ENCODE measurements at regions of chr20 and their contacts with region 1.

Region 1: DNA sequence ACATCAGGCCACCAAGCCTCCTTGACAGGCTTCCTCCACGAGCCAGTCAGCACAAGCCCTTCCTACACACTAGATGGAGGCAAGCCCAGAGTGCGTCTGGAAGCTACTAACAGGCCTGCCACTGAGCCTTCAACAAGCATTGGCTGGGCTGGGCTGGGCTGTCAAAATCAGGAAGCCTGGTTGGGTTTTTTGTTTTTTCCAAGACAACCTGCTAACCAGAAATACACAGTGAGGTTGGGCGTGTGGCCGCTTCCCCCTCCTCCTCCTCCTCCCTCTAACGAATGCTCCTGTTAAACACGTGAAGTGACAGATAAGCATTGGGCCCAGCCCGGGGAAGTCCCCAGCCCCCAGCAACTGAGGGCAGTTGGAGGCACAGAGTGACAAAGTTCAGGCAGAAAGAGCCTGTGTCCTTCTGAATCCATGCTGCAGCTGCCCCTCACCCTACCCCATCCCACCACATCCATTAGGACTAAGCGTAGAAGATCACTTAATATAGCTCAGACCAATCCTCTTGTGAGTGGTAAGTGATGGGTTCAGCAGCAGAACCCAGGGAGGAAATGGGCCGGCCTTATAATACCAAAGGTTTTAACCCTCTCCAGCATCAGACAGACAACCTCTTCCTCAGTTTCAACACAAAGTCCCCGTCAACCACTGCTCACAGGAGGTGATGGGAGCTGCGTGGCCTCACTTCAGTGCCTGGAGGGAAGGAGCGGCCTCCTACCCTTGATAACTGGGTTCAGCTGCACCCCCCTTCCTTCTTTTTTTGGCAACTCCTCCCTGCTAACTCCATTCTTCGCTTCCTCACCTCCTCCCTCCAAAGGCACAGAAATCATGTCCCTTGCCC is 1.1 kb downstream of the NFATC2 start:
- DNase-seq: peak; percentile 54
- ATAC-seq: peak; percentile 63
- H3K4me3 Mint-ChIP-seq: peak overlapping the region; percentile 98
- H3K27ac Mint-ChIP-seq: peak overlapping the region; percentile 98
- H3K4me1 Mint-ChIP-seq: peaks cover 55% of the 10 kb centered on the region
- H3K27me3 Mint-ChIP-seq: no peaks in the 10 kb centered on the region
- CTCF ChIP-seq: no peak

Region 2: GRCh38 chr20:50815162-50815989 is 726.0 kb before region 1 on chr20:
- CTCF ChIA-PET with region 1: no interaction called
- POLR2A ChIA-PET with region 1: no interaction called
- intact Hi-C with region 1: loop called (anchors 10 kb)
- DNase-seq: no peak
- ATAC-seq: peak; percentile 56
- H3K4me3 Mint-ChIP-seq: peak overlapping the region; percentile 81
- H3K27ac Mint-ChIP-seq: peak overlapping the region; percentile 98
- H3K4me1 Mint-ChIP-seq: peaks cover 96% of the 10 kb centered on the region
- H3K27me3 Mint-ChIP-seq: no peaks in the 10 kb centered on the region
- CTCF ChIP-seq: no peak

Region 3: DNA sequence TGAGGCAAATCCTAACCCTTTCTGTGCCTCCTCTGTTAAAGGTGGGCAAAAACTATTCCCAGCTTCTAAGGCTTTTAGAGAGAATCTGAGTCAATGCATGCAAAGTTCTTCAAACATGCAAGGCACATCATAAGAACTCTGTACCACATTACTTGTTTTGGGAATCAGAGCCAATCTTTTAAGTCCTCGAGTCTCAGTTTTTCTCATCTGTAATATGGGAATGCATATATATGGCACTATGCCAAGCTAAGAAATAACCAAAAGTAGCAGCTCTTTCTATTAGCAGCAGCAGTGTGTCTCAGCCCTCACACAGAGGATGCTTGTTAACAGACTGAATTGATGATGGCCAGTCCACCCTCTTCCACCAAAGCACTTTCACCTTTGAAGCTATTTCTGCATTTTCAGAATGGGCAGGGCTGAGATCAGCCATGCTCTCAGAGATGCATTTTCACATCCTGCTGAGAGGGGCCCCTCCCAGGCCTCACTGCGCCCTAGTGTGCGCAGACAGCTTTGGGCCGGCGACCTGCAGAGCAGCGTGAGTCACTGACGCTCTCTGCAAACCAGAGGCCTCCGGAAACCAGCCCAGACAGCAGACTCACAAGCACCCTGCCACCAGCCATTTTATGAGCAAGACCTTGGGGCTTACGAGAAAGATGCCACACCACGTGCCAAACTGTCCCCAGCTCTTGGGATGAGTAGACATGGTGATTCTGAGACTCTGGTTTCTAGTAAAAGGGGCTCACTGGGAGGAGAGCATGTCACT is 136.9 kb before region 1 on chr20:
- CTCF ChIA-PET with region 1: interaction called, 13 read pairs
- POLR2A ChIA-PET with region 1: interaction called, 22 read pairs
- intact Hi-C with region 1: loop called (anchors 1 kb)
- DNase-seq: peak; percentile 69
- ATAC-seq: peak; percentile 80
- H3K4me3 Mint-ChIP-seq: peak overlapping the region; percentile 56
- H3K27ac Mint-ChIP-seq: peak overlapping the region; percentile 99
- H3K4me1 Mint-ChIP-seq: peaks cover 84% of the 10 kb centered on the region
- H3K27me3 Mint-ChIP-seq: no peaks in the 10 kb centered on the region
- CTCF ChIP-seq: no peak

Region 4: GRCh38 chr20:51423290-51423667 is 118.1 kb before region 1 on chr20:
- CTCF ChIA-PET with region 1: interaction called, 6 read pairs
- POLR2A ChIA-PET with region 1: no interaction called
- intact Hi-C with region 1: loop called (anchors 2 kb)
- DNase-seq: no peak
- ATAC-seq: peak; percentile 70
- H3K4me3 Mint-ChIP-seq: peak overlapping the region; percentile 4
- H3K27ac Mint-ChIP-seq: peak overlapping the region; percentile 82
- H3K4me1 Mint-ChIP-seq: peaks cover 65% of the 10 kb centered on the region
- H3K27me3 Mint-ChIP-seq: no peaks in the 10 kb centered on the region
- CTCF ChIP-seq: no peak

Region 5: DNA sequence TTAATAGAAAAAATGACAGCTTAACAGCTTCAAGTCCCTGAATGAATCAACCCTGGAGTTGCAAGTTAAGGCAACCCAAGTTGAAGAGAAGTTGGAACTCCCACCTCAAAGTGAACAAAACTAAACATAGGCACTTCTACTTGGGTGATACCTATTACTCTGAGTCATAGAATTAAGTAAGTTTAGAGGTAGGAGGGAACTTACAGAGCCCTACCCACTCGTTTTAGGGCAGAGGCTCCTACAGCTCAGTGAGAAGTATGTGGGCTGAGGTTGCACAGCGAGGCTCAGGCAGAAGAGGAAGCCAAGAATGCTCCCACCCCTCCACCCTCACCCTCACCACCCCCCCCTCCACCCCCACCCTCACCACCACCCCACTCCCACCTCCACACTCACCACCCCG is 41.1 kb before region 1 on chr20:
- CTCF ChIA-PET with region 1: interaction called, 5 read pairs
- POLR2A ChIA-PET with region 1: interaction called, 8 read pairs
- intact Hi-C with region 1: loop called (anchors 1 kb)
- DNase-seq: no peak
- ATAC-seq: peak; percentile 85
- H3K4me3 Mint-ChIP-seq: no peak overlapping the region
- H3K27ac Mint-ChIP-seq: peak overlapping the region; percentile 69
- H3K4me1 Mint-ChIP-seq: peaks cover 93% of the 10 kb centered on the region
- H3K27me3 Mint-ChIP-seq: no peaks in the 10 kb centered on the region
- CTCF ChIP-seq: no peak

Region 6: GRCh38 chr20:51531141-51531710 is 10.2 kb before region 1 on chr20:
- CTCF ChIA-PET with region 1: interaction called, 5 read pairs
- POLR2A ChIA-PET with region 1: interaction called, 35 read pairs
- intact Hi-C with region 1: loop called (anchors 1 kb)
- DNase-seq: no peak
- ATAC-seq: peak; percentile 55
- H3K4me3 Mint-ChIP-seq: peak overlapping the region; percentile 62
- H3K27ac Mint-ChIP-seq: peak overlapping the region; percentile 89
- H3K4me1 Mint-ChIP-seq: peaks cover 92% of the 10 kb centered on the region
- H3K27me3 Mint-ChIP-seq: no peaks in the 10 kb centered on the region
- CTCF ChIP-seq: no peak

Region 7: DNA sequence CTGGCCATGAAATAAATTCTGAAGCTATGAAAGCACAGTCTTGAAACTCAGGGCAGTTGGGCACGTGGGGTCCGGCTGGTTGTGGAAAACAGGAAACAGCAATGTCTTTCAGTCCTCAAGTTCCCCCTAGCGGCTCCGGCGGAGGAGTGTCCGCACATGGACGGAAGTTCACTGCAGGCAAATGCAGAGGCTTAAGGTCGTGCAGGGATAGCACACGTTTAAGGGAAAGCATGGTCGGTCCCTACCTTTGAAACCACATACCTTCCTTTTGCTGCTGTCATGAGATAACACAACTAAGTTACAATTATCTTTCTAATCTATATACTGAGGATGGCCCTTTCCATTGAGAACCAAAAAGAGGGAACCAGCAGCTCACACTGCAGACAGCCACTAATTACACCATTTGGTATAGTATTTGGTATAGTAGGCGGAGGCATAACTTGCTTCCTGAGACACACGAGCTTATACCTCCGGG is 53.7 kb after region 1 on chr20:
- CTCF ChIA-PET with region 1: interaction called, 15 read pairs
- POLR2A ChIA-PET with region 1: interaction called, 3 read pairs
- intact Hi-C with region 1: loop called (anchors 1 kb)
- DNase-seq: peak; percentile 57
- ATAC-seq: peak; percentile 93
- H3K4me3 Mint-ChIP-seq: peak overlapping the region; percentile 55
- H3K27ac Mint-ChIP-seq: no peak overlapping the region
- H3K4me1 Mint-ChIP-seq: peaks cover 21% of the 10 kb centered on the region
- H3K27me3 Mint-ChIP-seq: peaks cover 38% of the 10 kb centered on the region
- CTCF ChIP-seq: peak; percentile 91

Region 8: DNA sequence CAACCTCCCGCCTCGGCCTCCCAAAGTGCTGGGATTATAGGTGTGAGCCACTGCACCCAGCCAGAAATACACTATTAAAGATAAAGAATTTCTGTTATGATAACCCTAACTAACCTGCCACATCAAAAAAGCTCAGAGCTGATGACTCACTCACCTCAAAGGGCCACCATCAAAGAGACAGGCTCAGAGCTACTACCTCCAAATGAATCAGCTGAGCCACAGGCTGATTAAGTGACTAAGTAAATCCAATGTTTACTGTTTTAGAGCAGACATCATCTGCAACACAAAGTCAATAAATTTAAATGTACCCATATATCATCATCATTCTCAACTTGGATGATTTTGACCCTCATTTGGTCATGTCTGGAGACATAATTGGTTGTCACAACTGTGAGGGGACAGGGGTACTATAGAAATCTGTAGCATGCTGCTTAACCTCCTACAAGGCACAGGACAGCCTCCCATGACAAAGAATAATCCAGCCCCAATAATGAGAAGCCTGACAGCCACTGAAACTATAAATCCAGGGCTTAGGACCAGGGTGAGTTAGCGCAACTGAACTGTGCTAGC is 120.3 kb after region 1 on chr20:
- CTCF ChIA-PET with region 1: no interaction called
- POLR2A ChIA-PET with region 1: no interaction called
- intact Hi-C with region 1: no loop called
- DNase-seq: no peak
- ATAC-seq: peak; percentile 10
- H3K4me3 Mint-ChIP-seq: no peak overlapping the region
- H3K27ac Mint-ChIP-seq: no peak overlapping the region
- H3K4me1 Mint-ChIP-seq: peaks cover 15% of the 10 kb centered on the region
- H3K27me3 Mint-ChIP-seq: peaks cover 3% of the 10 kb centered on the region
- CTCF ChIP-seq: no peak

Region 9: DNA sequence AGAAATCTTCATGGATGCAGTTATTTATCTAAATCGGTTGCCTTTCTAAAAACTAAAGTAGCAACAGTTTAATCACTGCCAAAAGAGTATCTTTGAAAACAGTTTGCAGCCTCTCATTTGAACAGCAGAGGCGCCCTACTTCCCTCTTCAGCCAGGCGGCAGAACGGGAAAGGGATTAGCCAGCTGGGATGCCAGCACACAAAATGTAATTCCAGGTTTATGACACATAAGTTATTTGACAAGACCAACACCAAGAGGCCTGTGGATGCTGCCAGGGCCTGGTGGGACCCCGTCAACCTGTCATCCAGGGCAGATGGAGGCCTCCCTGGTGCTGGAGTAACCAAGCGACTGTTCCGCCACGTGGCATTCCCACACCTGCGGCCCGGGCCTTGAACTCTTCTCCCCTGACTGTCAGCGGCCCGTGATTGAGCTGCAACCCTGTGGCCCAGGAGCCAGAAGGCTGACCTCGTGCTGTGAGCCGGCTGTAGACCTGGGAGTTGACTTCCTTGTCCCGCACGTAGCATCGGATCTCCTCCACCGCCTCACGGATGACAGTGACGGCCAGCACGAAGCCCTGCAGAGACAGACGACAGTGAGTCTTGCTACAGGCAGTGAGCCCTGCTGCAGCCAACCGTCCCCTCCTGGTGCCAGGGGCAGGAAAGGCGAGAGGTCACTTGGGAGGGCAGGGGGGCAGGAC is 171.2 kb after region 1 on chr20:
- CTCF ChIA-PET with region 1: no interaction called
- POLR2A ChIA-PET with region 1: no interaction called
- intact Hi-C with region 1: no loop called
- DNase-seq: no peak
- ATAC-seq: no peak
- H3K4me3 Mint-ChIP-seq: no peak overlapping the region
- H3K27ac Mint-ChIP-seq: no peak overlapping the region
- H3K4me1 Mint-ChIP-seq: no peaks in the 10 kb centered on the region
- H3K27me3 Mint-ChIP-seq: peaks cover 4% of the 10 kb centered on the region
- CTCF ChIP-seq: no peak